ENCODE measurements at regions of chr9 and their contacts with region 1.

Region 1: DNA sequence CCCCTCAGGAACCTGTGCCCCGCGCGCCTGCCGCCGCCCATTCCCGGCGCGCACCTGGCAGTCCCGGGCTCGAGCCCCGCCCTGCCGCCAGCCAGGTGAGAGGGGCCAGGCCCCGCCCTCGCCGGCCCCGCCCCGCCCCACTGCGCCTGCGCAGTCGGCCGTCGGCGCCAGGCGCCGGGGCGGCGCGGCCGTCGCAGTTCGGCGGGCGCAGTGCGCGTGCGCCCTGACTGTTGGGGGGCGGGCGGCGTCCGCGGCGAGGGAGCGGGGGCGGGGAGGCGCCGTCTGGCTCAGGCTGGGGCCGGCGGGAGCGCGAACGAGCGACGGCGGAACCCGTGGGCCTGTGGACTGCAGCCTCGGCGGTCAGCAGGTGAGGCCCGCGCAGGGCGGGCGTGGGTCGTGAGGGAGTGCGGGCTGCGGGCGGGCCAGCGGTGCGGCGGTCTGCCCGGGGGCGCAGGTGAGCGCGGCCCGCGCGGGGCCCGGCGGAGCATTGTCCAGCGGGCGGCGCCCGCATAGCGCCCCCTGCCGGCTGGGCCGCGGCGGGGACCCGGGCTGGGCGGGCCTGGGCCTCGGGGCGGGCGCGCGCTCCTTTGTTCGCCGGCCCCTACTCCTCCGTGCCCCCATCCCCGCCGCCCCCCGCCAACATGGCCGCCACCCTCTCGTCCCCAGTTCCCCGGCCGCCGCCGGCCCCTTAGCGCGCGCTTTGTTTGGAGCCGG is at the start of gene SPIN1:
- DNase-seq: peak; percentile 88
- H3K4me3 ChIP-seq: peak within 1 kb of the TSS; percentile 81
- H3K27ac ChIP-seq: peak within 1 kb of the TSS; percentile 86
- H3K4me1 ChIP-seq: peaks cover 18% of the 10 kb centered on the region
- H3K27me3 ChIP-seq: no peaks in the 10 kb centered on the region
- CTCF ChIP-seq: no peak
- total RNA-seq, gene SPIN1: 157 and 164 TPM in 2 replicates

Region 2: GRCh38 chr9:88106491-88106890 is 281.8 kb before region 1 on chr9:
- CTCF ChIA-PET with region 1: no interaction called
- POLR2A ChIA-PET with region 1: no interaction called
- intact Hi-C with region 1: loop called (anchors 5 kb)
- DNase-seq: peak; percentile 74
- H3K4me3 ChIP-seq: no peak overlapping the region
- H3K27ac ChIP-seq: no peak overlapping the region
- H3K4me1 ChIP-seq: no peaks in the 10 kb centered on the region
- H3K27me3 ChIP-seq: no peaks in the 10 kb centered on the region
- CTCF ChIP-seq: peak; percentile 72

Region 3: DNA sequence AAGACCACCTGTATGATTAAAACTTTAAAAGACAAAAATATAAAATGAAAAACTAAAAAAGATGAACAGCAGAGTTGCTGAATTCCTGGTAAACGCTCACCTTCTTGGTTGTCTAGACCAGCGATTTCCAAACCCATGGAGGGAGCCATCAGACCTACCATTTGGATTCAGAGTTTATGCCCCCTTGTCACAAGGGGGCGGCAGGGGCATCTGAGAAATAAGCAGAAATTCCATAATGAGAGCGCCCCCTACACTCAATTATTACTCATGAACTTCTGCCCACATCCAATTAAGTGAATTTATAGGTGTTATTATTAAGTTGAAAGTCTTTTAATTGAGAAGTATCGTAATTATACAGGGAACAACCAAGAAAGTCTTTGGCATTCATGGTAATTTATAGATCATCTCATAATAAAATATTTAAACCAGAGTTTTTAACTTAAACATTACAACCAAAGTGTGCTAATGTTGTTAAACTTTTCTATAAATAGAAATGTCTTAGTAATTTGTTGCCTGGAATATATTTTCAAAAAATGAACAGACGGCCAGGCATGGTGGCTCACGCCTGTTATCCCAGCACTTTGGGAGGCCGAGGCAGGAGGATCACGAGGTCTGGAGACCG is 214.8 kb before region 1 on chr9:
- CTCF ChIA-PET with region 1: no interaction called
- POLR2A ChIA-PET with region 1: no interaction called
- intact Hi-C with region 1: loop called (anchors 5 kb)
- DNase-seq: peak; percentile 86
- H3K4me3 ChIP-seq: no peak overlapping the region
- H3K27ac ChIP-seq: no peak overlapping the region
- H3K4me1 ChIP-seq: peaks cover 12% of the 10 kb centered on the region
- H3K27me3 ChIP-seq: no peaks in the 10 kb centered on the region
- CTCF ChIP-seq: peak; percentile 85

Region 4: GRCh38 chr9:88197781-88198340 is 190.5 kb before region 1 on chr9:
- CTCF ChIA-PET with region 1: no interaction called
- POLR2A ChIA-PET with region 1: no interaction called
- intact Hi-C with region 1: loop called (anchors 5 kb)
- DNase-seq: peak; percentile 90
- H3K4me3 ChIP-seq: peak overlapping the region; percentile 15
- H3K27ac ChIP-seq: peak overlapping the region; percentile 97
- H3K4me1 ChIP-seq: peaks cover 53% of the 10 kb centered on the region
- H3K27me3 ChIP-seq: no peaks in the 10 kb centered on the region
- CTCF ChIP-seq: no peak

Region 5: GRCh38 chr9:88534456-88535261 is 146.3 kb after region 1 on chr9 and contains the start of gene NXNL2:
- CTCF ChIA-PET with region 1: interaction called, 3 read pairs
- POLR2A ChIA-PET with region 1: no interaction called
- intact Hi-C with region 1: loop called (anchors 5 kb)
- DNase-seq: peak; percentile 82
- H3K4me3 ChIP-seq: peak within 1 kb of the TSS; percentile 53
- H3K27ac ChIP-seq: peak within 1 kb of the TSS; percentile 78
- H3K4me1 ChIP-seq: peaks cover 38% of the 10 kb centered on the region
- H3K27me3 ChIP-seq: no peaks in the 10 kb centered on the region
- CTCF ChIP-seq: no peak
- total RNA-seq, gene NXNL2: 1.3 TPM in 2 replicates

Region 6: GRCh38 chr9:88578121-88579054 is 190.1 kb after region 1 on chr9:
- CTCF ChIA-PET with region 1: no interaction called
- POLR2A ChIA-PET with region 1: no interaction called
- intact Hi-C with region 1: loop called (anchors 10 kb)
- DNase-seq: peak; percentile 76
- H3K4me3 ChIP-seq: peak overlapping the region; percentile 32
- H3K27ac ChIP-seq: no peak overlapping the region
- H3K4me1 ChIP-seq: peaks cover 34% of the 10 kb centered on the region
- H3K27me3 ChIP-seq: no peaks in the 10 kb centered on the region
- CTCF ChIP-seq: peak; percentile 98

Measured in A673 (cell line).